Vagina (tissue), 2 donors: ENCODE measurements at regions of chr11 and their contacts with region 1.

Region 1: DNA sequence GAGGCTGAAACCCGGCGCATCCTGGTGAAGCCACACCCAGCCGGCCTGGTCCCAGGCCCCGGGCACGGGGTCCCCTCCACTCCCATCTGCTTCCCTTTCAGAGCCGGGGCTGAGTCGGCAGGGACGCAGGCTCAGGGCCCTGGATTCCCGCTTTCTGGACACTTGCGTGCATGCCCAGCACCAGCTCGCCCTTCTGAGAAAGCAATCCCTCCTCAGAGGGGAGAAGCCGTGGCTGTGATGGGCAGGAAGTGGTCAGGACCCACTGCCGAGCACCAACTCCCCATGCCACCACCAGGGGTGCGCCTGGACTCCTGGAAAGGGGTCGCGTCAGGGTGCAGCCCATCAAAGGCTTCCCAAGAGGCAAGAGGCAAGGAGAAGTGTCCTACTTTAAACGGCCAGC is 15.1 kb downstream of the CDKN1C start:
- DNase-seq: no peak
- H3K4me3 ChIP-seq: no peak overlapping the region
- H3K27ac ChIP-seq: no peak overlapping the region
- H3K4me1 ChIP-seq: no peaks in the 10 kb centered on the region
- H3K27me3 ChIP-seq: no peaks in the 10 kb centered on the region
- CTCF ChIP-seq: no peak
- POLR2A ChIP-seq: no peak

Region 2: DNA sequence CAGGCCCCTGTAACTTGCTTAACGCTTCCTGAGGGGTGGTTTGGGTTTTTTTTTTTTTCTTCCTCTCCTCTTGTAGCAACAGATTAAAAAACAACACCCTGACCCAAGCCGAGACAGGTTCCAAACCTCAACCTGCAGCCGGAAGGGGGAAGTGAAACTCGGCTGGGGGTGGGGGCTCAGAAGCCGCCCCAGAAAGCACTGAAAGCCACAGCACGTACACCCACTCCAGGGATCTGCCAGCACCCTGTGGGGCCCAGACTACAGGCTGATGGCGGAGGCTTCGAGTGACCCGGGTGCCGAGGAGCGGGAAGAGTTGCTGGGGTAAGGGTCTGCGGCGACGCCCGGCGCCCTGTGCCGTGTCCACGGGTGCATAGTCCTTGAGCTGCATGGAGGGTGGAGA is 1017.6 kb before region 1 on chr11 and contains the start of gene LSP1:
- intact Hi-C with region 1: loop called (anchors 10 kb)
- DNase-seq: no peak
- H3K4me3 ChIP-seq: peak within 1 kb of the TSS; percentile 13 to 32
- H3K27ac ChIP-seq: no peak within 1 kb of the TSS
- H3K4me1 ChIP-seq: no peaks in the 10 kb centered on the region
- H3K27me3 ChIP-seq: no peaks in the 10 kb centered on the region
- CTCF ChIP-seq: no peak
- POLR2A ChIP-seq: no peak
- total RNA-seq, gene LSP1: 32.7 TPM

Region 3: GRCh38 chr11:2750682-2751387 is 119.6 kb before region 1 on chr11:
- intact Hi-C with region 1: no loop called
- DNase-seq: no peak
- H3K4me3 ChIP-seq: no peak overlapping the region
- H3K27ac ChIP-seq: no peak overlapping the region
- H3K4me1 ChIP-seq: no peaks in the 10 kb centered on the region
- H3K27me3 ChIP-seq: no peaks in the 10 kb centered on the region
- CTCF ChIP-seq: no peak
- POLR2A ChIP-seq: no peak